Natural killer cell (primary cell): ENCODE measurements at regions of chr5 and their contacts with region 1.

Region 1: GRCh38 chr5:923281-923873 is 30.7 kb downstream of the TRIP13 start:
- DNase-seq: peak; percentile 68 to 80
- ATAC-seq: peak; percentile 84 to 96 (median 92)
- H3K4me3 ChIP-seq: no peak overlapping the region
- H3K4me3 Mint-ChIP-seq: no peak overlapping the region
- H3K27ac ChIP-seq: no peak overlapping the region
- H3K27ac Mint-ChIP-seq: no peak overlapping the region
- H3K4me1 ChIP-seq: peaks cover 7% of the 10 kb centered on the region
- H3K4me1 Mint-ChIP-seq: peaks cover 0 to 14% of the 10 kb centered on the region in 2 donors
- H3K27me3 ChIP-seq: peaks cover 7% of the 10 kb centered on the region
- H3K27me3 Mint-ChIP-seq: peaks cover 25 to 34% of the 10 kb centered on the region in 2 donors
- CTCF ChIP-seq: peak; percentile 75

Region 2: GRCh38 chr5:1140171-1140817 is 216.9 kb after region 1 on chr5:
- intact Hi-C with region 1: loop called (anchors 1 kb)
- DNase-seq: peak; percentile 75 to 83
- ATAC-seq: peak; percentile 54 to 96 (median 89)
- H3K4me3 ChIP-seq: no peak overlapping the region
- H3K4me3 Mint-ChIP-seq: no peak overlapping the region
- H3K27ac ChIP-seq: no peak overlapping the region
- H3K27ac Mint-ChIP-seq: peak overlapping the region in 1 of 2 donors; percentile 44
- H3K4me1 ChIP-seq: peaks cover 14% of the 10 kb centered on the region
- H3K4me1 Mint-ChIP-seq: peaks cover 0 to 27% of the 10 kb centered on the region in 2 donors
- H3K27me3 ChIP-seq: no peaks in the 10 kb centered on the region
- H3K27me3 Mint-ChIP-seq: peaks cover 0 to 13% of the 10 kb centered on the region in 2 donors
- CTCF ChIP-seq: peak; percentile 77

Region 3: DNA sequence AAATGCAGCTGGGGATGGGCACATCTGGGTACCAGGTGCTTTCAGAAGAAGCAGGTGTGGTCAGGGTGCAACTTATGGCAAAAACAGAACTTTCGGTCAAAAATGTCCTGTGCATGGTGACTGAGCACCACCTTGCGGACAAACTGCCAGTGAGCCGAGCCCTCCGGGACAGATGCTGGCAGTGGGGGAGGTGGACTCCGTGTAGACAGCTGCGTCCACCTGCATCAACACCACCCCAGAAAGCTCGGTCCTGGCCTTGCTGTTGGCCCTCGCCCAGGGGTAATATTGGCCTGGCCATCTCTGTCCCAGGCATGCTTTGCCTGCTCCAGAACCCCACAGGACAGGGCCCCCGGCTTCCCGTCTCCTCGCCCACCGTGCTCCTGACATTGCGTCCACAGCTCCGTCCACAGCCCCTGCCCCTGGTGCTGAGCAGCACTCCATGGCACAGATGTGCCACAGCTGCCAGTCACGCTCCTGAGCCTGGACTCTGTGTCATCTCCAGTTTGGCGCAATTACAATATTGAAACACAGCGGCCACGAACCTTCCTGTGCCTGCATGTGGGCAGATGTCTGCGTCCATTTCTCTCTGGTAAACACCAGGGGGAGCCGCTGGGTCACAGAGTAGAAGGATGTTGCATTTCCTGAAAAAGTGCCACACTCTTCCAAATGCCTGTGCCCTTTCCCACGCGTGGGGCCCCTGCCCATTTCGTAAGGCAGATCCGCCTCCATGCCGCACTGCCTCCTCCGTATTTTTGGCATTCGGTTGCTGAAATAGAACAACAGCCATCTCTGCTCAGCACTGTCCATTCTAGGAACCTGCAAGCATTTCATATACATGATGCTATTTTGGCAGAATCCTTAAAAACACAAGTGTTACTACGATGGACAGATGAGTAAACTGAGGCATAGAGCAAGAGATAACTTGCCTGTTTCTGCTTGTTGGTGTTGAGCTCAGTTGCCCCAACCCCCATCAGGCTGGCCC is 244.6 kb after region 1 on chr5:
- intact Hi-C with region 1: loop called (anchors 1 kb)
- DNase-seq: peak; percentile 59 to 85
- ATAC-seq: peak; percentile 73 to 89 (median 86)
- H3K4me3 ChIP-seq: peak overlapping the region; percentile 6
- H3K4me3 Mint-ChIP-seq: peak overlapping the region; percentile 86
- H3K27ac ChIP-seq: no peak overlapping the region
- H3K27ac Mint-ChIP-seq: peak overlapping the region in 1 of 2 donors; percentile 54
- H3K4me1 ChIP-seq: peaks cover 22% of the 10 kb centered on the region
- H3K4me1 Mint-ChIP-seq: peaks cover 13 to 14% of the 10 kb centered on the region in 2 donors
- H3K27me3 ChIP-seq: no peaks in the 10 kb centered on the region
- H3K27me3 Mint-ChIP-seq: peaks cover 6 to 19% of the 10 kb centered on the region in 2 donors
- CTCF ChIP-seq: peak; percentile 91

Region 4: DNA sequence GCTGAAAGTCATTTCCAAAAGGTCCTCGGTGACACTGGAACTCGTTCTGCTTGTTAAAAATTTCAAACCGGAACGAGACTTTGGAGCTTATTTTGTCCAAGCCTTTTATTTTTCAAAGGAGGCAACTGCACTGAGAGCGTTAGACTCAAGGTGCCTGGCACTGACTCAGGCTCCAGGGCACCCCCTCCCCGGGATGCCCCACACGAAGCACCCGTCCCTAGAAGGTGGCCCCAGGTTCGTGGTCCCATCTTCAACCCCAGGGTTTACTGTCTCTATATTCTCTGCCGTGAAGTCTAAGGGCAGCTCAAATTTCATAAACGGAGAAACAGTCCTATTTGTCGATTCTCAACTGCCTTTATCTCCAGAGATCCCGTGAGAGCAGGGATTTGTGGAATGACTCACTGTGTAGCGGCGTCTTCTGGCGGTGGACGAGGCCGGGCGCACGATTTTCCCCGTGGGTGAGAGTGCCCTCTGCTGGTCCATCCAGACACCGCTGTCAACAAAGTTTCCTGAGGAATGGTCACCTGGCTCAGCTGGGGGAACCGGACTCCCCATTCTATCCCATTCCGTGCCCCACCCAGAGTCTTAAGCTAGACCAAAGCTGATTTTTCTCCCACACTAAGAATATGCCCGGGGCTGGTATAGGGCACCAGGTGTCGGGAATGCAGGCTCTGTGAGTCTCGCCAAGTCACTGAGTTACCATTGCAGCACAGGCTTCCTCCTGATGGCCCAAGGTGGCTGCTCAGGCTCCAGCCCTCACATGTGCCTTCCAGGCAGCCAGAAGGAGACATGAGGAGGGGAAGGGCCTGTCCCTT is 251.0 kb after region 1 on chr5:
- intact Hi-C with region 1: loop called (anchors 1 kb)
- DNase-seq: peak; percentile 40 to 61
- ATAC-seq: peak in 2 of 3 donors; percentile 60 to 70
- H3K4me3 ChIP-seq: no peak overlapping the region
- H3K4me3 Mint-ChIP-seq: no peak overlapping the region
- H3K27ac ChIP-seq: no peak overlapping the region
- H3K27ac Mint-ChIP-seq: no peak overlapping the region
- H3K4me1 ChIP-seq: peaks cover 24% of the 10 kb centered on the region
- H3K4me1 Mint-ChIP-seq: peaks cover 8 to 11% of the 10 kb centered on the region in 2 donors
- H3K27me3 ChIP-seq: no peaks in the 10 kb centered on the region
- H3K27me3 Mint-ChIP-seq: no peaks in the 10 kb centered on the region
- CTCF ChIP-seq: peak; percentile 68

Region 5: GRCh38 chr5:1652596-1653345 is 729.4 kb after region 1 on chr5:
- intact Hi-C with region 1: loop called (anchors 10 kb)
- DNase-seq: no peak
- ATAC-seq: no peak
- H3K4me3 ChIP-seq: no peak overlapping the region
- H3K4me3 Mint-ChIP-seq: no peak overlapping the region
- H3K27ac ChIP-seq: no peak overlapping the region
- H3K27ac Mint-ChIP-seq: no peak overlapping the region
- H3K4me1 ChIP-seq: peaks cover 4% of the 10 kb centered on the region
- H3K4me1 Mint-ChIP-seq: no peaks in the 10 kb centered on the region
- H3K27me3 ChIP-seq: peaks cover 18% of the 10 kb centered on the region
- H3K27me3 Mint-ChIP-seq: peaks cover 25 to 43% of the 10 kb centered on the region in 2 donors
- CTCF ChIP-seq: no peak